Right ventricle myocardium superior (tissue), 1 donor: ENCODE measurements at regions of chr12 and their contacts with region 1.

Region 1: GRCh38 chr12:79935021-79935623 is at the start of gene PPP1R12A:
- DNase-seq: peak; percentile 99
- ATAC-seq: peak; percentile 97
- total RNA-seq, gene PPP1R12A: 38.8 TPM

Region 2: DNA sequence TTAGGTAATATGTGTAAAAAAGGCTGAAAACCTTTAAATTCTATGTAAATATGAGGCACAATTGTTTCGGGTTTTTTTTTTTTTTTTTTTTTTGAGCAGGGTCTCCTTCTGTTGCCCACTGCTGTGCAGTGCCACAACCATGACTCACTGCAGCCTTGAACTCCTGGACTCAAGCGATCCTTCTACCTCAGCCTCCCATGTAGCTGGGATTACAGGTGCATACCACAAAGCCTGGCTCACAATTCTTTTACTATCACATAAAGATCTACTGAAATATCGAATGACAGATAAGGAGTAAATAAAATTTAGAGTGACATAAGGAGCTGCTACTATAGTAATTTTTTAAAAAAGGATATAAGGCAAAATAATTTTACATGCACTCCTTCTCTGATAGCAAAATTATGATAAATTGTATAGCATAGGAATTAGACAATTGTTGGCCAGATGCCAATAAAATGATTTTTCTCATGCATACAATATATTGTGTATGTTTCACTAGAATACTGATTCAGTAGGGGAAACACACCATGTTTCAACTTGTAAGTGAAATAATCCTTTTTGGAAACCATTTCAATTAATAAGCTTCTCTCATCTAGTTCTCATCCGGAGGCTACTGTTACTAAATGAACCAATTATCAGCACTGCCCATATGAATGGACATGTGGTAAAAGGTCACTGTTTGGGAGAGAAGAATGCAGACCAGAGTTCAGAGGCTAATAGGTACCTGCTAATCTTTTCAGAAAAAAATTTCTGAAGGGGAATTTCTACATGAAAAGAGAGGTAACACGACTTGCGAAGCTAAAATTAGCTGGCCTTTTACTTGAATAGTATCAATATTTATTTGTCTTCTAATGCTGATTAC is 108.6 kb before region 1 on chr12:
- intact Hi-C with region 1: loop called (anchors 10 kb)
- DNase-seq: no peak
- ATAC-seq: no peak

Region 3: DNA sequence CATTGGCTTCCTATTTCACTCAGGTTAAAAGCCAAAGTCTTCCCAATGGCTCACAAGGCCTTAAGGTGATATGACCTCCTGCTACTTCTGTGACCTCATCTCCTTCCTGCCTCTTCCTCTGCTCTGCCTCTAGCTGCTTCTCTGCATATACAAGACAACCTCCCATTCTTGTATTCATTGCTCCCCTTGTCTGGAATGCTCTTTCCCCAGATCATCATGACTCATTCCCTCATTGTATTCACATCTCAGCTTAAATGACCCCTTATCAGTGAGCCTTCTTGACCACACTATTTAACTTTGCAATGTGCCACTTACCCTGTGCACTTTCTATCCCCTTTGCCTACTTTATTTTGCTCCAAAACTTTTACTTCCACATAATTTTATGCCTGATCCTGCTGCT is 90.4 kb before region 1 on chr12:
- intact Hi-C with region 1: no loop called
- DNase-seq: no peak
- ATAC-seq: no peak

Region 4: GRCh38 chr12:79959484-79959883 is 24.4 kb after region 1 on chr12:
- intact Hi-C with region 1: no loop called
- DNase-seq: no peak
- ATAC-seq: peak; percentile 51

Region 5: DNA sequence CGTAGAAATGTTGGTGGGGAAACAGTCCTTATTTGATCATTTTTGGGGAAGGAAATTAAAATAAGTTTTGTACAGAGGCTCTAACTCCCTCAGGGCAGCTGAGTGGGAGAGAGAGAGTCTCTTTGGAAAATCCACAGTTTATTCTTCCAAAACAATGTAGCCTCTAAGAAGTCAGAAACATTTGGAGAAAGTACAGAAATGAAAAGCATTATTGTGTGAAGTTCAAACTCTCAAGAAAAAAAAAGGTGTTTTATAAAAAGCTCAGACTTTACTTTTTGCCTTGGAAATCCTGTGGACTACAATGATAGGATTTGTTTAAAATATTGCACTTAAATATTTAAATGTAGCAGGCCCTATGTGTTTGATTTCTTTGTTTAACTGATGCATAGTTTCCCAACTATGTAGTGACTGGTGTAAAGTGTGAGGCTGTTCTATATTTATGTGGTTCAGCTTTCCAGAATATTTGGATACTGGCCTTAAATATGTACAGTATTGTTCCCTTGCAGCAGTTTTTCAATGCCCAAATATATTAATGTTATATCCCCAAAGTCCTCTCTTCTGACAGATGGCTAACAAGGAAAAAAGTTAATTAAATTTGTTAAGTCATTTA is 82.2 kb after region 1 on chr12:
- intact Hi-C with region 1: no loop called
- DNase-seq: no peak
- ATAC-seq: no peak

Region 6: DNA sequence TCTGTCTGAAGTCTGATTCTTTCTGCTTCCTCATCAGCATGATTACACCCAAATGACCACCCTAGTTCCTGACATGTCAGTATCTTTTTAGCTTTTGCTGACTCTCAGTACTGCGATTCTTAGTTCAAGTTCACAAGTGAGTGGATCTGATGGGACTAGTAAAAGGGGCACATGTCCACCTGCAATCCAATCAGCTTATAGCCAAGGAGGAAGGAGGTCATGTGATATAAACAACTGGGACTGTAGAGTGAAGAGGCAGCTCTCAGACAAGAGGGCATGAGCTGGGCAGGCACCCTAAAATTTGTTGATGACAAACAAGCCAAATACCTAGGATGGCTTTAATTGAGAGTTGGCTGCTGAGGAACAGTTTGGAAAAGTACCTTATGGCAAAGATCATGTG is 96.1 kb after region 1 on chr12:
- intact Hi-C with region 1: no loop called
- DNase-seq: no peak
- ATAC-seq: no peak

Region 7: GRCh38 chr12:80186727-80187217 is 251.7 kb after region 1 on chr12:
- intact Hi-C with region 1: loop called (anchors 10 kb)
- DNase-seq: no peak
- ATAC-seq: peak; percentile 95